Posterior vena cava (tissue), 2 donors: ENCODE measurements at regions of chr4 and their contacts with region 1.

Region 1: DNA sequence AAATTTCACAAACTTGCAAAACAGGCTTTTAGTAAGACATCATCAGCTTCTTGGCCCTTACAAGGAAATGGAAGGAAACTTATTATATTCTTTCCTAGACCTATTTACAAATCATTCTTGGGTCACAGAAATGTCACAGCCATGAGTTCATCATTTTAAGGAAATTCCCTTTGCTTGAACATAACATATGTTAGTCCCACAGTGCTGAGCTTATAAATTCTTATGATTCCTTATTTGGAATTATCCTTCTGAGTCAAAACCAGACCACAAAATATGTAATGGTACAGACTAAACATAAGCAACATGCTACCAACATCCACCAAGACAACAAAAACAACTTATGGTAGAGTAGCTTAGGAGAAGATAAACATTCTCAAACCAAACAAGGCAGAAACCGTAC is 236.9 kb upstream of the CTSO start:
- DNase-seq: no peak

Region 2: GRCh38 chr4:156158747-156159146 is 31.9 kb before region 1 on chr4:
- intact Hi-C with region 1: no loop called
- DNase-seq: no peak

Region 3: DNA sequence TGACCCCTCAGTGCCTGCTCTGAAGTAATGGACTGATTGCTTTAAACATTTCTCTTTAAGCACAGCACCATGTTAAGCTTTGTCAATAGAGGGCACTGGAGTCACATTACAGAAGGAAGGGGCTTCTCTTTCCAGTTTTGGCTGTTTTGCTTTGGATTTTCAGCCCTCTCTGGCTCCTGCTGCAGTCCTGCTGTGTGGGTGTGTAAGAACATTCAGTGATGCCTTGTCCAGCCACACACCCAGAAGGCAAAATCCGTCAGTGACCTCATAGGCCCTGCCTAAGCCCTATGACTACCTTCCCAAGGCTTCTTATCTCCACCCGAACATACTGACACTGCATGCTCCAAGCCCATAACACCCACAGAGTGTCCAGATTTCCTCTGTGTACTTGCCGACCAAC is 21.6 kb before region 1 on chr4:
- intact Hi-C with region 1: no loop called
- DNase-seq: peak; percentile 78

Region 4: GRCh38 chr4:157821814-157822213 is 1631.2 kb after region 1 on chr4:
- intact Hi-C with region 1: loop called in 1 of 2 experiments (anchors 5 kb)
- DNase-seq: peak; percentile 58